ENCODE measurements at regions of chr10 and their contacts with region 1.

Region 1: DNA sequence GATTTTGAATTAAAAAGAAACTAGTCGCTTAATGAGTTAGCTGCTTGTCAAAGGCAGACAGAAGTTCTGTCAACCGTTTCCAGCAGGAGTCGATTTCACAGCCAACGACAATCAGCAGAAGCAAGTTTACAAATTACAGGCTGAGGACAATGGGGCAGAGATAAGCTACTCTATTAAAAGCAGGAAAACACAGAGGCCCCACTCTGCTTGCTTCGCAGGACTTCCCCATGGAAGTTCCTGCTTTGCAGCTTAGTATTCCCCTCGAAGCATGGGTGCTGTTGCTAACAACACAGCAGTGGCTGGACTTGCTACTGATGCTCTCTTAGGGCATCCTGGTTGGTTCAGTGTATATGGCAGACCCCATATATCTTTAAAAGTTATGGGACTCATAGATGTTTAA is 50.8 kb upstream of the KLF6 start:
- DNase-seq: peak in 1 of 5 donors; percentile 26
- ATAC-seq: peak; percentile 74 to 91 (median 84)
- H3K4me3 ChIP-seq: peak overlapping the region in 1 of 12 donors; percentile 1
- H3K27ac ChIP-seq: peak overlapping the region in 4 of 12 donors; percentile 5 to 63 (median 12)
- H3K4me1 ChIP-seq: peaks cover 0 to 39% (median 12%) of the 10 kb centered on the region in 12 donors
- H3K27me3 ChIP-seq: no peaks in the 10 kb centered on the region
- CTCF ChIP-seq: no peak
- POLR2A ChIP-seq: no peak

Region 2: DNA sequence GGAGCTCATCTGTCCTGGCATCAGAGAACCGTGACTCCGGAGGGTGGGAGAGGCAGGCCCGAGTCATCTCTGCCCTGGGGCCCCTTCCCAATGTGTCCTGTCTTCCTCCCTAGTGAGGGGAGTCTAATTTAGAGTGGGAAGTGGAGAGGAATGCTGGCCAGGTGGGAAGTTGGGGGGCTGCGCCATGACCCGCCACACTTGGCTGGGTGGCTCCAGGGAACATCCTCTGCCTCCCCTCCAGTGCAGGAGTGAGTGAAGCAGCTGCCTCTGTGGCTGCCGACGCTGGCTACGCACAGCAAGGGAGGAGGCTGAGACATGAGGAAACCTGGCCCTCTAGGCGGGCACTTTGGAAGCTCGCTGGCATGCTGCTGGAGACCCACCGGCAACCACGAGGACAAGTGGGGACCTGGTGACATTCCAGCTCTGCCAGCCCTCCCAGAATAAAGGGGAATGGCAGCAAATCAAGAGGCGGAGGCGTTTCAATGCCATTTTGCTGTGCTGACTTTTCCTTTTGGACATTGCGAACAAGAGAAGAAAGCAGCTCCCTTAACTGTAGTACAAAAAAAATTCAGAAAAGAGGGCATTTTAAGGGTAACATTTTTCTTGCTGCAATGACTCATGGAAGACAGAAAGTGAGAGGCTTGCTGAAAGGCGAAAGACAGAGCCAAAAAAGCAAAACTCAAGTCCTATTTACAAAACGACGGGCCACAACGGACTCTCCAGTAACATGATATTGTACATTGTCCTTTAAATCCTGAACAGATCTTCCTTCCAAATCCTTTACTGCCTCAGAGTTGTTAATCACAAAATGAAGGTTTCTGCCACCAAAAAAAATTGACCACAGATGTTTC is 542.0 kb before region 1 on chr10:
- intact Hi-C with region 1: no loop called
- DNase-seq: no peak
- ATAC-seq: no peak
- H3K4me3 ChIP-seq: no peak overlapping the region
- H3K27ac ChIP-seq: peak overlapping the region in 1 of 12 donors; percentile 58
- H3K4me1 ChIP-seq: no peaks in the 10 kb centered on the region
- H3K27me3 ChIP-seq: no peaks in the 10 kb centered on the region
- CTCF ChIP-seq: no peak
- POLR2A ChIP-seq: no peak

Region 3: GRCh38 chr10:3852147-3852904 is 16.6 kb after region 1 on chr10:
- intact Hi-C with region 1: loop called in 1 of 10 experiments (anchors 2 kb)
- DNase-seq: peak; percentile 61 to 74 (median 66)
- ATAC-seq: peak; percentile 65 to 89 (median 86)
- H3K4me3 ChIP-seq: peak overlapping the region in 1 of 12 donors; percentile 13
- H3K27ac ChIP-seq: peak overlapping the region in 11 of 12 donors; percentile 26 to 85 (median 54)
- H3K4me1 ChIP-seq: peaks cover 0 to 51% (median 17%) of the 10 kb centered on the region in 12 donors
- H3K27me3 ChIP-seq: no peaks in the 10 kb centered on the region
- CTCF ChIP-seq: no peak
- POLR2A ChIP-seq: peak in 1 of 2 donors; percentile 14

Measured in heart left ventricle (tissue), 16 donors.